Activated CD4-positive, alpha-beta memory T cell treated with anti-CD3 and anti-CD28 coated beads for 36 hours (primary cell): ENCODE measurements at regions of chr7 and their contacts with region 1.

Region 1: DNA sequence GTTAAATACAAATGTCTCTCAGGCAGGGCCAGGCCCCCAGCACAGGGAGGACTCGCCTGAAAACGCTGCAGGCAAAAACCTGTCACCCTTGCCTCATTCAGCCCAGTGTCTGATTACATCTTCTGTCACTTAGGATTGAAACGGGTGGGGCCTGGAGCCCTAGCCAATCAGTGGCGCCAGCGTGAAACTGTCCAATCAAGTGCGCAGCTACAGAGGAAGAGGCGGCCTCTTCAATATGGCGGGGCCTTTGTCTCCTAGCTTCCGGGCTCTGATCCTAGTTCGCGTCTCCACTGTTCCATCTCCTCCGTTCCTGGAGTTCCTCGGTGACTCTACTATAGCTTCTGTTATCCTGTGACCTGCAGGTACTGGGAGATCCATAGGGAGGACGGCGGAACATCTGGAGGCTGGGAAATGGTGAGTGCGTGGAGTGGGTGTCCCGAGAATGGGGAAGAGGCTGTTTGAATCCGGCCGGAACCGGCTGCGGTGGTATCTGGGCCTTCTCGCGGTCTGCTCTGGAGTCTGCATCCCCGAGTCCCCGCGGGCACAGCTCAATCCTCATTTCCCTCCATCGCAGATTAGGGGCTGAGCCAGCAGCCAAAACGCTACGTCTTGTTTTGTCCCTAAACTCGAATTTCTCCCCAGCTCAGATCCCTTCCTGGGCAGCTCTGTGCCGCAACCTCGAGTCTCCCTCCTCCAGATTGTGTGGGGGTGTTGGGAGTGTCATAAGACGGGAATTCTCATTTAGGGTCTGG is at the start of gene ZNF736:
- DNase-seq: peak; percentile 94
- H3K4me3 Mint-ChIP-seq: peak within 1 kb of the TSS; percentile 99
- H3K27ac Mint-ChIP-seq: peak within 1 kb of the TSS; percentile 97
- H3K4me1 Mint-ChIP-seq: peaks cover 35% of the 10 kb centered on the region
- H3K27me3 Mint-ChIP-seq: no peaks in the 10 kb centered on the region
- total RNA-seq, gene ZNF736: 23.6 TPM

Region 2: GRCh38 chr7:64266341-64266919 is 47.5 kb before region 1 on chr7:
- CTCF ChIA-PET with region 1: no interaction called
- POLR2A ChIA-PET with region 1: no interaction called
- intact Hi-C with region 1: no loop called
- DNase-seq: no peak
- H3K4me3 Mint-ChIP-seq: no peak overlapping the region
- H3K27ac Mint-ChIP-seq: no peak overlapping the region
- H3K4me1 Mint-ChIP-seq: no peaks in the 10 kb centered on the region
- H3K27me3 Mint-ChIP-seq: no peaks in the 10 kb centered on the region

Region 3: GRCh38 chr7:64359543-64359942 is 45.6 kb after region 1 on chr7:
- CTCF ChIA-PET with region 1: no interaction called
- POLR2A ChIA-PET with region 1: no interaction called
- intact Hi-C with region 1: no loop called
- DNase-seq: no peak
- H3K4me3 Mint-ChIP-seq: no peak overlapping the region
- H3K27ac Mint-ChIP-seq: no peak overlapping the region
- H3K4me1 Mint-ChIP-seq: no peaks in the 10 kb centered on the region
- H3K27me3 Mint-ChIP-seq: no peaks in the 10 kb centered on the region

Region 4: GRCh38 chr7:64625114-64626082 is 311.5 kb after region 1 on chr7:
- CTCF ChIA-PET with region 1: interaction called, 3 read pairs
- POLR2A ChIA-PET with region 1: no interaction called
- intact Hi-C with region 1: loop called (anchors 10 kb)
- DNase-seq: no peak
- H3K4me3 Mint-ChIP-seq: no peak overlapping the region
- H3K27ac Mint-ChIP-seq: no peak overlapping the region
- H3K4me1 Mint-ChIP-seq: peaks cover 3% of the 10 kb centered on the region
- H3K27me3 Mint-ChIP-seq: no peaks in the 10 kb centered on the region

Region 5: GRCh38 chr7:64794171-64794844 is 480.4 kb after region 1 on chr7 and contains the start of gene ZNF138:
- CTCF ChIA-PET with region 1: no interaction called
- POLR2A ChIA-PET with region 1: interaction called, 3 read pairs
- intact Hi-C with region 1: loop called (anchors 5 kb)
- DNase-seq: peak; percentile 97
- H3K4me3 Mint-ChIP-seq: peak within 1 kb of the TSS; percentile 99
- H3K27ac Mint-ChIP-seq: peak within 1 kb of the TSS; percentile 97
- H3K4me1 Mint-ChIP-seq: peaks cover 18% of the 10 kb centered on the region
- H3K27me3 Mint-ChIP-seq: no peaks in the 10 kb centered on the region
- total RNA-seq, gene ZNF138: 10.3 to 10.5 TPM

Region 6: GRCh38 chr7:65006094-65006992 is 692.4 kb after region 1 on chr7 and contains the start of gene ERV3-1:
- CTCF ChIA-PET with region 1: no interaction called
- POLR2A ChIA-PET with region 1: interaction called, 3 read pairs
- intact Hi-C with region 1: loop called (anchors 10 kb)
- DNase-seq: peak; percentile 96
- H3K4me3 Mint-ChIP-seq: peak within 1 kb of the TSS; percentile 95
- H3K27ac Mint-ChIP-seq: peak within 1 kb of the TSS; percentile 70
- H3K4me1 Mint-ChIP-seq: peaks cover 36% of the 10 kb centered on the region
- H3K27me3 Mint-ChIP-seq: no peaks in the 10 kb centered on the region
- total RNA-seq, gene ERV3-1: 8.2 to 8.7 TPM

Region 7: GRCh38 chr7:65373608-65374351 is 1059.9 kb after region 1 on chr7 and contains the start of gene ZNF92:
- CTCF ChIA-PET with region 1: no interaction called
- POLR2A ChIA-PET with region 1: no interaction called
- intact Hi-C with region 1: loop called (anchors 2 kb)
- DNase-seq: peak; percentile 98
- H3K4me3 Mint-ChIP-seq: peak within 1 kb of the TSS; percentile 95
- H3K27ac Mint-ChIP-seq: peak within 1 kb of the TSS; percentile 88
- H3K4me1 Mint-ChIP-seq: peaks cover 30% of the 10 kb centered on the region
- H3K27me3 Mint-ChIP-seq: no peaks in the 10 kb centered on the region
- total RNA-seq, gene ZNF92: 12.9 to 13.9 TPM